ENCODE measurements at regions of chr4 and their contacts with region 1.

Region 1: DNA sequence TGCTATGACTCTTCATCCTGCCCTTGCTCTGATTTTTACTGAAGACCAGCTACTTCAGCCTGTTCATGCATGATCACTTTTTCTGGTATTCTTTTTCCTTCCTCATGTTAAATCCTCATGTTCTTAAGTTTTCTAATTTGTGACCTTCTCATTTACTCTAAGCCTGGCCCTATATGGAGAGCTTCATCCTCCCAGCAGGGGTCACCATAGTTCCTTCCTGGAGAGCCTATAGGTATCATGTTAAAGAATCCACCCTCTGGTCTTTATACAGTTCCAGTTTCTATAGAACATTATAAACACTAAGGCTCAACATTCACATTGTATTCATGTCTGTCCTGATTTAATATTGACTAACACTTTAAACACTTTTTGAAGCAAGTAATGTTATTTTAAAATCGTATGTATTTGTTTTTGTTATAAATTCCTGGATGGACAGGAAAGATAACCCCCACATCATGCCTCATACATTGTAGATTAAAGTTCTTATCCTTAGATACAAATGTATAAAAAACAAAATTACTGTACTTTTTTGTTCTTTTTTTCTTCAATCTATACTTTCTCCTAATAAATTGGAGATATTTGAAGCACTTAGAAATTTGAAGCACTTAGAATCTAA is 53.8 kb upstream of the OTUD4 start:
- DNase-seq: no peak
- ATAC-seq: peak; percentile 83
- H3K4me3 ChIP-seq: no peak overlapping the region
- H3K27ac ChIP-seq: no peak overlapping the region
- H3K4me1 ChIP-seq: peaks cover 7% of the 10 kb centered on the region
- H3K27me3 ChIP-seq: no peaks in the 10 kb centered on the region
- CTCF ChIP-seq: peak; percentile 77

Region 2: GRCh38 chr4:144449611-144450010 is 784.6 kb before region 1 on chr4:
- intact Hi-C with region 1: no loop called
- DNase-seq: no peak
- ATAC-seq: no peak
- H3K4me3 ChIP-seq: no peak overlapping the region
- H3K27ac ChIP-seq: no peak overlapping the region
- H3K4me1 ChIP-seq: no peaks in the 10 kb centered on the region
- H3K27me3 ChIP-seq: no peaks in the 10 kb centered on the region
- CTCF ChIP-seq: no peak

Region 3: GRCh38 chr4:145388043-145388442 is 153.8 kb after region 1 on chr4:
- intact Hi-C with region 1: no loop called
- DNase-seq: no peak
- ATAC-seq: no peak
- H3K4me3 ChIP-seq: no peak overlapping the region
- H3K27ac ChIP-seq: no peak overlapping the region
- H3K4me1 ChIP-seq: no peaks in the 10 kb centered on the region
- H3K27me3 ChIP-seq: no peaks in the 10 kb centered on the region
- CTCF ChIP-seq: no peak

Region 4: DNA sequence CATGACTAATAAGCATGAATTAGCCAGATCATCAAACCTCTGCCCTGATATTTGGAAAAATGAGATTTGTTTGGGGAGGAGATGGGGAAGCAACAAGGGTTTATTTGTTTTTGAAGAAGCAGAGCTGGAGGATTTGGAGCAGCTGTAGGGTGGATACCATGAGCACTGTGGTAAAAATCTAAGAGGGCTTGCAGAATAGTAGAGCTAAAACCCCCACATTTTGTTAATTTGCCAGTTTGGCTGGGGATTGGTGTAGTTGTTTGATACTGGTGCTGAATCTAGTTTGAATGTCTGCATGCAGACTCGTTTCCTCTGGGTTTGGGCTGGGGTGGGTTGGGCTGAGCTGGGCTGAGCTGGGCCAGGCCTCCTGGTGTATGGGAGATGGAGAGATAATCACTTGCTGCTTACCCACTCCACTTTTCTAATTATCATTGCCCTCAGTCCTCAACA is 291.1 kb after region 1 on chr4:
- intact Hi-C with region 1: no loop called
- DNase-seq: no peak
- ATAC-seq: no peak
- H3K4me3 ChIP-seq: no peak overlapping the region
- H3K27ac ChIP-seq: no peak overlapping the region
- H3K4me1 ChIP-seq: no peaks in the 10 kb centered on the region
- H3K27me3 ChIP-seq: no peaks in the 10 kb centered on the region
- CTCF ChIP-seq: no peak

Region 5: GRCh38 chr4:145618932-145619638 is 384.9 kb after region 1 on chr4 and contains the start of gene MMAA:
- intact Hi-C with region 1: loop called (anchors 10 kb)
- DNase-seq: peak; percentile 99
- ATAC-seq: peak; percentile 99
- H3K4me3 ChIP-seq: peak within 1 kb of the TSS; percentile 81
- H3K27ac ChIP-seq: peak within 1 kb of the TSS; percentile 96
- H3K4me1 ChIP-seq: peaks cover 6% of the 10 kb centered on the region
- H3K27me3 ChIP-seq: no peaks in the 10 kb centered on the region
- CTCF ChIP-seq: peak; percentile 68
- total RNA-seq, gene MMAA: 11.9 TPM

Measured in upper lobe of right lung (tissue), 1 donor.